CD8-positive, alpha-beta memory T cell (primary cell): ENCODE measurements at regions of chr2 and their contacts with region 1.

Region 1: GRCh38 chr2:39210846-39211245 is 32.9 kb downstream of the CDKL4 start:
- DNase-seq: no peak
- H3K4me3 ChIP-seq: no peak overlapping the region
- H3K4me3 Mint-ChIP-seq: no peak overlapping the region
- H3K27ac ChIP-seq: no peak overlapping the region
- H3K27ac Mint-ChIP-seq: peak overlapping the region in 1 of 8 donors; percentile 34
- H3K4me1 ChIP-seq: peaks cover 4% of the 10 kb centered on the region
- H3K4me1 Mint-ChIP-seq: peaks cover 5 to 35% (median 17%) of the 10 kb centered on the region in 3 donors
- H3K27me3 ChIP-seq: no peaks in the 10 kb centered on the region
- H3K27me3 Mint-ChIP-seq: peaks cover 0 to 2% of the 10 kb centered on the region in 2 donors

Region 2: GRCh38 chr2:39164089-39164488 is 46.8 kb before region 1 on chr2:
- CTCF ChIA-PET with region 1: interaction called, 3 read pairs
- POLR2A ChIA-PET with region 1: interaction called, 11 read pairs
- DNase-seq: no peak
- H3K4me3 ChIP-seq: no peak overlapping the region
- H3K4me3 Mint-ChIP-seq: no peak overlapping the region
- H3K27ac ChIP-seq: no peak overlapping the region
- H3K27ac Mint-ChIP-seq: peak overlapping the region in 1 of 8 donors; percentile 48
- H3K4me1 ChIP-seq: no peaks in the 10 kb centered on the region
- H3K4me1 Mint-ChIP-seq: peaks cover 0 to 6% (median 0%) of the 10 kb centered on the region in 3 donors
- H3K27me3 ChIP-seq: no peaks in the 10 kb centered on the region
- H3K27me3 Mint-ChIP-seq: peaks cover 2 to 5% of the 10 kb centered on the region in 2 donors